ENCODE measurements at regions of chr6 and their contacts with region 1.

Region 1: DNA sequence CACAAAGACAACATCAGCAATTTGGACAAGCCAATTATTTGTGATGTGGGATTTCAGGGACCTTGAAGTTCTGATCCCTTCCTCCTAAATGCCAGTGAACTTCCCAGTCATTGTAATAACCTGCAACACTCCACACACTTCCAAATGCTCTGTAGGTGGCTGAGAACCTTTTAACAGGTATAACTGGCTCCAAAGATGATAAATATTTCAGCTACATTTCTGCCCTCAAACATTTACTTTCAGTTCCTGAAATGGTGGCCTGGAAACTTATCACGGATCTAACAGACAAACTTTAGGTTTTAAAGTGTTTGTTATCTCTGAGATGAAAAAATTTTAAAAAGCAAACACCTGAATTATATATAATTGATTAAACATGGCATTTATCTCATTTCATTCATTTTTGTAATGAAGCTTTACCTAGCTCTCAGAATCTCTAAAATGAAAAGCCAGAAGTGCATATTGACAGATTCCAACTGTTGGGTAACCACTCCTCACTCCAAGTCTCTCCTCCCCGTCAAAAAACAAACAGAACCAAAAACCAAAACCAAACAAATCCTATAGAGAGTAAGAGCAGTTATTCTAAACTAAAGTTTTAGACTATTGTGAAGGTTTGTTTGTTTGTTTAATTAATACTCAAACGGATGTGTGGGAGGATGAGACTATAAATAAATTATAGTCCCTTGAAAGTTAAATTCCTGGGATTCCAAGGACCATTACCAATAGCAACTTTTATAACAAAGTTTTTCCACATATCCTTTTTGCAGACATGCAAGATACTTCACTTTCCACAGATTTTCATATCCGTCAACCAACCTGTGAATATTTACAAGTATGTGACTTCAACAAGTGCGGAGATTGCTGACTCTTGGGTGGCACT is 12.4 kb upstream of the KIAA0408 start:
- DNase-seq: no peak
- ATAC-seq: no peak
- H3K4me3 ChIP-seq: no peak overlapping the region
- H3K27ac ChIP-seq: no peak overlapping the region
- H3K4me1 ChIP-seq: no peaks in the 10 kb centered on the region
- H3K27me3 ChIP-seq: no peaks in the 10 kb centered on the region

Region 2: DNA sequence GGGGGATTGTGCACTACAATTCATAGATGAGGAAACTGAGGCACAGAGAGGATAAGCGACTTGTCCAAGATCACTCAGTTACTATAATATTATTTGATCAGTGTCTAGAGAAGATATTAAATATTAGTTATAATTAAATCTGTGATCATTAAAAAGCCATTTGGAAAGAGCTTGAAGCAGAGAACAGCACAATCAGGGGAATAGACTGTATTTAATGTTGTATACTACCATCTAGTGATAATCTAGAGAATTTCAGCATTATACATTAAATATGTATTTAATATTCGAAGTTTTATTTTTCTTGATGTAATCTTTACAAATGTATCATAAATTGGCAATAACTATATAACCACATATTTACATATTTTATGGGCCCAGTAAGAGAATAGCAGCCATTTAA is 67.7 kb after region 1 on chr6:
- intact Hi-C with region 1: loop called in 2 of 4 experiments (anchors 10 kb)
- DNase-seq: no peak
- ATAC-seq: no peak
- H3K4me3 ChIP-seq: no peak overlapping the region
- H3K27ac ChIP-seq: no peak overlapping the region
- H3K4me1 ChIP-seq: no peaks in the 10 kb centered on the region
- H3K27me3 ChIP-seq: no peaks in the 10 kb centered on the region

Region 3: GRCh38 chr6:127792616-127793015 is 321.0 kb after region 1 on chr6:
- intact Hi-C with region 1: no loop called
- DNase-seq: no peak
- ATAC-seq: no peak
- H3K4me3 ChIP-seq: no peak overlapping the region
- H3K27ac ChIP-seq: no peak overlapping the region
- H3K4me1 ChIP-seq: peaks cover 1% of the 10 kb centered on the region
- H3K27me3 ChIP-seq: no peaks in the 10 kb centered on the region

Region 4: GRCh38 chr6:128240024-128240428 is 768.4 kb after region 1 on chr6:
- intact Hi-C with region 1: no loop called
- DNase-seq: no peak
- ATAC-seq: no peak
- H3K4me3 ChIP-seq: no peak overlapping the region
- H3K27ac ChIP-seq: no peak overlapping the region
- H3K4me1 ChIP-seq: peaks cover 7% of the 10 kb centered on the region
- H3K27me3 ChIP-seq: no peaks in the 10 kb centered on the region

Measured in right cardiac atrium (tissue), 5 donors.